ENCODE measurements at regions of chr11 and their contacts with region 1.

Region 1: GRCh38 chr11:133406489-133406888 is 125.8 kb downstream of the OPCML start:
- DNase-seq: no peak
- H3K4me3 ChIP-seq: no peak overlapping the region
- H3K27ac ChIP-seq: no peak overlapping the region
- H3K4me1 ChIP-seq: no peaks in the 10 kb centered on the region
- H3K27me3 ChIP-seq: no peaks in the 10 kb centered on the region
- CTCF ChIP-seq: no peak
- EP300 ChIP-seq: no peak
- POLR2A ChIP-seq: no peak
- RAD21 ChIP-seq: no peak

Region 2: GRCh38 chr11:133388975-133389568 is 17.4 kb before region 1 on chr11:
- CTCF ChIA-PET with region 1: interaction called, 23 read pairs
- POLR2A ChIA-PET with region 1: no interaction called
- DNase-seq: no peak
- H3K4me3 ChIP-seq: no peak overlapping the region
- H3K27ac ChIP-seq: no peak overlapping the region
- H3K4me1 ChIP-seq: peaks cover 0 to 4% (median 1%) of the 10 kb centered on the region in 4 experiments; a peak in 2 of 7 replicates
- H3K27me3 ChIP-seq: no peaks in the 10 kb centered on the region
- CTCF ChIP-seq: no peak
- EP300 ChIP-seq: no peak
- POLR2A ChIP-seq: no peak
- RAD21 ChIP-seq: no peak

Measured in H1 (cell line).